ENCODE measurements at regions of chr12 and their contacts with region 1.

Region 1: GRCh38 chr12:68944296-68945075 is 11.5 kb upstream of the CPM start:
- DNase-seq: no peak
- H3K4me3 ChIP-seq: no peak overlapping the region
- CTCF ChIP-seq: no peak

Region 2: GRCh38 chr12:68981516-68981915 is 37.0 kb after region 1 on chr12:
- in situ Hi-C with region 1: loop called (anchors 5 kb)
- DNase-seq: no peak
- H3K4me3 ChIP-seq: no peak overlapping the region
- CTCF ChIP-seq: no peak

Measured in astrocyte of the cerebellum (primary cell).